ENCODE measurements at regions of chr6 and their contacts with region 1.

Region 1: DNA sequence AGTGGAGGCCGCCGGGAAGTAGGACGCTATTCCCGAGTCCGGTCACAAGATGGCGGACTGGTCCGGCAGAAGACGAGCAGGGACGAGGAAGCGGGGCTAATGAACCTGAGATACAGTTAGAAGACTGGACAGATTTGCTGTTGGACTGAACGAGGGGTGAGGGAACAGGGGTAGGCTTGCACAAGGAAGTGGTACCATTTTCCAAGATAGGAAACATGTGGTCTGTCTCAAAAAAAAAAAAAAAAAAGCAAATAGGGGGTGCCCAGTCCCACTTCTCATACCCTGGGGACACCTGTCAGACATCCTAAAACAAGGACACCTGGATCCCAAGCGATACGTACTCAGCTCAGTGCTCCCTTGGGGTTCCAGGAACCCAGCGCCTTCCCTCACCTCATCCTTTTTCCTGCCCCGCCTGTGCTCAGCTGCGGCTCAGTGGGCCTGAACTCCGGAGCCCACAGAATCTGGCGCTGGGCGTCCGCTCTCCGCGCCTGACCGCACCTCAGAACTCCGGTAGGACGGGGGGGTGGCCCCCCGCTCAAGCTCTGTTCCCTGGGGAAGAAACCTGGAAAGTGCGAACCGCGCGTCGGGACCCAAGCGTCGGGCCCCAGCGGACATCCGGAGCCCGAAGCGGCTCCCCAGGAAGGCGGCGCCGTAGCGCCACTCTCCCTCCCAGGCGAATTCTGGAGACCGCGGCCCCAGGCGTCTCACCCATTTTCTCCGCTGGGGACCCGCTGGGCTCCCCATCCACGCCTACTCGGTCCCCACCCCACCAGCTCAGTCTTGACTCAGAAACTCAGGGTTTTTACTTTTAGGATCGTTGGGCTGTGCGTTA is at the start of gene LY6G5C:
- DNase-seq: peak; percentile 85
- H3K4me3 Mint-ChIP-seq: peak within 1 kb of the TSS; percentile 74
- H3K27ac Mint-ChIP-seq: no peak within 1 kb of the TSS
- H3K4me1 Mint-ChIP-seq: peaks cover 11% of the 10 kb centered on the region
- H3K27me3 Mint-ChIP-seq: no peaks in the 10 kb centered on the region
- total RNA-seq, gene LY6G5C: 0.93 to 1.4 TPM

Region 2: DNA sequence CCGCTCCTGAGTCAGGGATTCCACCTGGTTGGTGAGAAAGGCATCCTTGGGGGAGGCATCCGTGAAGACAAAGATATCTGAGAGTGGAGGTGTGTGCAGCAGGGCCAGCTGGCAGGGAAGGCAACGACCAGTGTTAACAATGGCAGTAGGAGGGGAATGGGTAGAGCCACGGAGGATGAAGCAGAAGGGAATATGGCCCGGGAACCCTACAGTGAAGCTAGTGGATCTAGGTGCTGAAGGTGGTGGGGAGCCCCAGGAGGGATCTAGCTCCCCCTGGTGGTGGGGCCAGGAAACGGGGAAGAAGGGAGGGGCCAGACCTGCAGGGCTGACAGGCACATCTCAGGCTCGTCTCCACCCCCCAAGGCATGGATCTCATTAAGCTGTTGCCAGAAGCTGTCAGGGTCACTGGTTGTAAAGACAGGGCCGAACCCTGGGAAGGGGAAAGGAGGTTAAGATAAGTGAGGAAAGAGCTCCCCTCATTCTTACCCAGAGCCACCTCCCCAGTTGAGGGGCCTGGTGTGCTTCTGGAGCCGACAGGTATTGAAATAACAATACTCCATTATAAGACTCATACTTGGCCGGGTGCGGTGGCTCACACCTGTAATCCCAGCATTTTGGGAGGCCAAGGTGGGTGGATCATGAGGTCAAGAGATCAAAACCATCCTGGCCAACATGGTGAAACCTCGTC is 88.8 kb after region 1 on chr6:
- CTCF ChIA-PET with region 1: interaction called, 6 read pairs
- intact Hi-C with region 1: loop called (anchors 2 kb)
- DNase-seq: peak; percentile 86
- H3K4me3 Mint-ChIP-seq: no peak overlapping the region
- H3K27ac Mint-ChIP-seq: no peak overlapping the region
- H3K4me1 Mint-ChIP-seq: peaks cover 27% of the 10 kb centered on the region
- H3K27me3 Mint-ChIP-seq: no peaks in the 10 kb centered on the region

Region 3: DNA sequence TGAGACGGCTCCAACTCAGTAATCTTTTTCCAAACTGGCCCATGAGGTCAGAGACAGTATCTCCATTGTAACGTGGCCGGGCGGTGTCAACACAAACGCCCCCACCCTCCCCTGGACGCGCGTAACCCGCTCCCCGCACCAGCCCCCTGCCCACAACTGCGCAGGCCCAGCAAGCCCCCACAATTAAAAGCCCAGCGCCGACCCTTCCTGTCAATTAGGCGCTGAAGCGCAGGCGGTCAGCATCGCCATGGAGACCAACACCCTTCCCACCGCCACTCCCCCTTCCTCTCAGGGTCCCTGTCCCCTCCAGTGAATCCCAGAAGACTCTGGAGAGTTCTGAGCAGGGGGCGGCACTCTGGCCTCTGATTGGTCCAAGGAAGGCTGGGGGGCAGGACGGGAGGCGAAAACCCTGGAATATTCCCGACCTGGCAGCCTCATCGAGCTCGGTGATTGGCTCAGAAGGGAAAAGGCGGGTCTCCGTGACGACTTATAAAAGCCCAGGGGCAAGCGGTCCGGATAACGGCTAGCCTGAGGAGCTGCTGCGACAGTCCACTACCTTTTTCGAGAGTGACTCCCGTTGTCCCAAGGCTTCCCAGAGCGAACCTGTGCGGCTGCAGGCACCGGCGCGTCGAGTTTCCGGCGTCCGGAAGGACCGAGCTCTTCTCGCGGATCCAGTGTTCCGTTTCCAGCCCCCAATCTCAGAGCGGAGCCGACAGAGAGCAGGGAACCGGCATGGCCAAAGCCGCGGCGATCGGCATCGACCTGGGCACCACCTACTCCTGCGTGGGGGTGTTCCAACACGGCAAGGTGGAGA is 134.2 kb after region 1 on chr6 and contains the starts of genes HSPA1A and HSPA1L:
- CTCF ChIA-PET with region 1: no interaction called
- intact Hi-C with region 1: loop called (anchors 2 kb)
- DNase-seq: peak; percentile 60
- H3K4me3 Mint-ChIP-seq: peak within 1 kb of the TSS; percentile 84
- H3K27ac Mint-ChIP-seq: peak within 1 kb of the TSS; percentile 96
- H3K4me1 Mint-ChIP-seq: peaks cover 54% of the 10 kb centered on the region
- H3K27me3 Mint-ChIP-seq: no peaks in the 10 kb centered on the region
- total RNA-seq, gene HSPA1A: 19.8 to 23.1 TPM
- total RNA-seq, gene HSPA1L: 0.86 to 0.95 TPM

Region 4: GRCh38 chr6:31952140-31952805 is 271.2 kb after region 1 on chr6:
- CTCF ChIA-PET with region 1: interaction called, 5 read pairs
- intact Hi-C with region 1: loop called (anchors 2 kb)
- DNase-seq: peak; percentile 60
- H3K4me3 Mint-ChIP-seq: no peak overlapping the region
- H3K27ac Mint-ChIP-seq: no peak overlapping the region
- H3K4me1 Mint-ChIP-seq: peaks cover 4% of the 10 kb centered on the region
- H3K27me3 Mint-ChIP-seq: no peaks in the 10 kb centered on the region

Measured in activated naive CD4-positive, alpha-beta T cell treated with anti-CD3 and anti-CD28 coated beads for 36 hours (primary cell).